ENCODE measurements at regions of chr17 and their contacts with region 1.

Region 1: GRCh38 chr17:14926526-14927122 is 338.5 kb downstream of the PMP22 start:
- DNase-seq: peak; percentile 38
- ATAC-seq: no peak
- H3K4me3 ChIP-seq: no peak overlapping the region
- H3K27ac ChIP-seq: no peak overlapping the region
- H3K4me1 ChIP-seq: peaks cover 17% of the 10 kb centered on the region
- H3K27me3 ChIP-seq: no peaks in the 10 kb centered on the region
- CTCF ChIP-seq: peak; percentile 79
- EP300 ChIP-seq: no peak
- POLR2A ChIP-seq: no peak
- RAD21 ChIP-seq: peak; percentile 51; the same call in 1 of the 2 replicates

Region 2: GRCh38 chr17:14268264-14268663 is 658.4 kb before region 1 on chr17:
- CTCF ChIA-PET with region 1: interaction called, 3 read pairs
- POLR2A ChIA-PET with region 1: no interaction called
- in situ Hi-C with region 1: loop called (anchors 25 kb)
- intact Hi-C with region 1: no loop called
- DNase-seq: peak; percentile 50
- ATAC-seq: peak; percentile 89
- H3K4me3 ChIP-seq: no peak overlapping the region
- H3K27ac ChIP-seq: no peak overlapping the region
- H3K4me1 ChIP-seq: no peaks in the 10 kb centered on the region
- H3K27me3 ChIP-seq: peaks cover 0 to 23% of the 10 kb centered on the region in 2 experiments; a peak in 3 of 5 replicates
- CTCF ChIP-seq: peak; percentile 67
- EP300 ChIP-seq: no peak
- POLR2A ChIP-seq: no peak
- RAD21 ChIP-seq: 0 out of 2 replicates have a peak, but pooled peaks have one; percentile 27

Region 3: DNA sequence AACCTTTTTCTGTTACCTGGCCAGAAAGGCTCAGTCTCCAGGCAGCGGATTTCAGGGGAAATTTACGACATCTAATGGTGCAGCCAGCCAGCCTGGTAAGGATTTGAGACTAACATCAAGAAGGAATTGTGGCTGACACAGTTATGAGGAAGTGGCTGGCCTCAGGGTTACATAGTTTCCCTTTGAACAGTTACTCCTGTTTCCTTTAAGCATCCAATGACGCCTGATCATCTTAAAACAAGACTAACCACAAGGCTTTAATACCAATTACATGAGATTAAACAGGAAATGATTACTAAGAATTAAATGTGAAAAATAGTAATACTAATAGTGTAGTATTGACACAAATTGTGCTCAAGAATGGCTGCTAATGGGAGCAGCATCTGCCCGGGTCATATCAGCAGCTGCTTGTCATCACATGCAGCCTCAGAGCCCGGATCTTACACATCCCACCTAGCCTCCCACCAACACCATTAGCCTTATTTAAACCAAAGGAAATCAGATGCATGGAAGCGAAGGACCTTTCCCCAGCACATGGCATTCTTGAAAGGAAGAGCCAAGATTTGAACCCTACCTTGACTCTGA is 93.3 kb before region 1 on chr17:
- CTCF ChIA-PET with region 1: no interaction called
- POLR2A ChIA-PET with region 1: no interaction called
- in situ Hi-C with region 1: no loop called
- intact Hi-C with region 1: no loop called
- DNase-seq: no peak
- ATAC-seq: no peak
- H3K4me3 ChIP-seq: no peak overlapping the region
- H3K27ac ChIP-seq: no peak overlapping the region
- H3K4me1 ChIP-seq: no peaks in the 10 kb centered on the region
- H3K27me3 ChIP-seq: no peaks in the 10 kb centered on the region; a peak in 1 of 5 replicates
- CTCF ChIP-seq: no peak
- EP300 ChIP-seq: no peak
- POLR2A ChIP-seq: no peak
- RAD21 ChIP-seq: no peak

Region 4: DNA sequence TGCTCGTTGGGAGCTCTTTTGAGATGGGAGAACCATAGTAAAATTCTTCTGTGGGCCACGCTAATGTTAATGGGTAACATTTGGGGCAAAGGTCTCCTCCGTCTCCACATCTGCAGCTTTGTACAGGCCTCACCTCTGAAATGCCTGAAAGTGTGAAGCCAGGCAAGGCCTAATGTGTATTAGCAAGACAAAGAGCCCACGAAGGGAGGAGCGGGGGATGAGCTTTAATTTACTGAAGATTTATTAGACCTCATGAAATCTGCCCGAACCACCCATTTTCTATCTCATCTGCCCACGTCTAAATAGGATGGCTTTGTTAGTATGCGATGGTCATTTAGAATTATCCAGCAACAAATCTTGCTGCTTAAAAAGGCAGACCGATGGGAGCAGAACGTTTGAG is 70.4 kb before region 1 on chr17:
- CTCF ChIA-PET with region 1: no interaction called
- POLR2A ChIA-PET with region 1: no interaction called
- in situ Hi-C with region 1: no loop called
- intact Hi-C with region 1: no loop called
- DNase-seq: no peak
- ATAC-seq: no peak
- H3K4me3 ChIP-seq: no peak overlapping the region
- H3K27ac ChIP-seq: no peak overlapping the region
- H3K4me1 ChIP-seq: no peaks in the 10 kb centered on the region
- H3K27me3 ChIP-seq: no peaks in the 10 kb centered on the region
- CTCF ChIP-seq: no peak
- EP300 ChIP-seq: no peak
- POLR2A ChIP-seq: no peak
- RAD21 ChIP-seq: no peak

Region 5: DNA sequence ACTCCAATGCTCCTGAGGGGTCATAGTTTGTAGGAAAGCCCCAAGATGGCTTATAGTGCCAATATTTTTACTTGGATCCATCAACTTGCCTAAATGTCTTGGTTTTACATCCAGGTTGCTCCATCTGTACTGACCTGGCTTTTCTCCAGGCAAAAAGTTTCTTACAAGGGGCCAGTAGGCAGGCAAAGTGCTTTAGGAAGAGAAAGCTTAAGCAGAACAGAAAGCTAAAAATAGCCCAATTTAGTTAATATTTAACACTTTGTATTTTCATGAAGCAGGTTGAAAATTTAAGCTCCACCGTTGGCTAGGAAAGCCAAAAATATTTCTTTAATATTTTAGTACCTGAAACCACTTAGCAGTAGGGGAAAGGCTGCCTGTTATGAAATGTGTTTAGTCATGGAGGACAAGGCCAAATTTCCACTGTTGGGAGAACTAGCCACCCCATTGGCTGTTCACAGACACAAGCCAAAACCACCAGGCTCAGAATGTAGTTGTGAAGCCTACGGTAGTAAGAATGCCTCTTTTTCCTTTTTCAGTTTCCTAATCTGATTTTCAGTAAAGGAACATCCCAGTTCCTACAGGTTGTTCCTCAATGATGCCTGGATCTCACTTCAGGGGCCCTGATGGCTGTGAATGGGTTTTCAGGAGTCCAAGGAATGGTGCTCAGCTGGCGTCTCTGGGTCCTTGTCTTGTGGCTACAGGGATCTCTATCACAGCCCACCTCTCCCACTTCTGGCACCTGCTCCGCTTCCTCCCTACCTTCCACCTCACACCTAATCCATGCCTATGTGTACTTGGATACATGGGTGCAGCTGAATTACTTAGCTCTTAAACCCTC is 13.7 kb after region 1 on chr17:
- CTCF ChIA-PET with region 1: no interaction called
- POLR2A ChIA-PET with region 1: no interaction called
- in situ Hi-C with region 1: no loop called
- intact Hi-C with region 1: no loop called
- DNase-seq: no peak
- ATAC-seq: no peak
- H3K4me3 ChIP-seq: no peak overlapping the region
- H3K27ac ChIP-seq: no peak overlapping the region
- H3K4me1 ChIP-seq: no peaks in the 10 kb centered on the region
- H3K27me3 ChIP-seq: no peaks in the 10 kb centered on the region; a peak in 1 of 5 replicates
- CTCF ChIP-seq: no peak
- EP300 ChIP-seq: no peak
- POLR2A ChIP-seq: no peak
- RAD21 ChIP-seq: no peak

Region 6: DNA sequence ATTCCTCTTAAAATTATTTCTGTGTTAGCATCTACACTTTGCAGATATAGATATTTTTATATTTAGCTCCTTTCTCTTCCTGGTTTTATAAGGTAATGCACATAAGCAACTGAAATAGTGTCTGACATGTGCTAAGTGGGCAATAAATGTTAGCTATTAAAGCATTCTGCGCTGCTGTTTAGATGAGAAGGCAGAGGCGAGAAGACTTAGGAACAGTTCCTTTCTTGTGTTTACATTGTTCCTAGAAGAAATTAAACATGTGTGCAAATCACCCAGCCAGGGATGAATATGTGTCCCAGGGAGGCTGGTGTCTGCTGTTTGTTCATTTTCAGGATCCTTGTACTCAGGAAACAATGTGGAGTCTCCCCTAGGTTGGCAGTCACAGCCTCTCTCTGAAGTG is 46.2 kb after region 1 on chr17:
- CTCF ChIA-PET with region 1: no interaction called
- POLR2A ChIA-PET with region 1: no interaction called
- in situ Hi-C with region 1: no loop called
- intact Hi-C with region 1: no loop called
- DNase-seq: no peak
- ATAC-seq: no peak
- H3K4me3 ChIP-seq: no peak overlapping the region
- H3K27ac ChIP-seq: no peak overlapping the region
- H3K4me1 ChIP-seq: no peaks in the 10 kb centered on the region
- H3K27me3 ChIP-seq: peaks cover 0 to 3% of the 10 kb centered on the region in 2 experiments; a peak in 2 of 5 replicates
- CTCF ChIP-seq: no peak
- EP300 ChIP-seq: no peak
- POLR2A ChIP-seq: no peak
- RAD21 ChIP-seq: no peak

Measured in HepG2 (cell line).